IMR-90 (cell line): ENCODE measurements at regions of chr7 and their contacts with region 1.

Region 1: DNA sequence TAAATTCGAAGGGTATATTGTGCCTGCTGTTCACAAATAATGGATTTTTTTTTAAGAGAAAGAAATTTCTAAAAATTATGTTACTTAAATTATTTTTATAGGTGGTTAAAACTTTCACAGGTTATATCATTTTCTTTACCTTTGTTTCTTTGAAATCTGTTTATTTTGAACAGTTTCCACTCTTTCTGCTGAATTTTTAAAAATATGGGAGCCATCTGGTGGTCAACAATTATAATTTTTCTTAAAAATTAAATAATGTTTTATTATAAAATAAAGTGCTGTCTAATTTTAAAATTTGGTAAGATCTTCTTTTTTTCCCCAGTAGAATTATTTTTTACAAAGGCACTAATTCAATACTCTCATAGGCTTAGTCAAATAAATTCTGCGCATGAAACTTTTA is 263.9 kb downstream of the ETV1 start:
- DNase-seq: no peak
- ATAC-seq: no peak
- H3K4me3 ChIP-seq: no peak overlapping the region
- H3K27ac ChIP-seq: no peak overlapping the region
- H3K4me1 ChIP-seq: no peaks in the 10 kb centered on the region
- H3K27me3 ChIP-seq: no peaks in the 10 kb centered on the region
- CTCF ChIP-seq: 0 out of 2 replicates have a peak, but pooled peaks have one; percentile 5
- POLR2A ChIP-seq: no peak
- RAD21 ChIP-seq: 0 out of 2 replicates have a peak, but pooled peaks have one; percentile 6

Region 2: GRCh38 chr7:13532028-13532753 is 193.4 kb before region 1 on chr7:
- CTCF ChIA-PET with region 1: no interaction called
- POLR2A ChIA-PET with region 1: no interaction called
- dilution Hi-C with region 1: no loop called
- in situ Hi-C with region 1: no loop called
- intact Hi-C with region 1: loop called (anchors 5 kb)
- DNase-seq: no peak
- ATAC-seq: no peak
- H3K4me3 ChIP-seq: no peak overlapping the region
- H3K27ac ChIP-seq: no peak overlapping the region
- H3K4me1 ChIP-seq: no peaks in the 10 kb centered on the region
- H3K27me3 ChIP-seq: no peaks in the 10 kb centered on the region; the same call in 1 of the 2 replicates
- CTCF ChIP-seq: no peak
- POLR2A ChIP-seq: no peak
- RAD21 ChIP-seq: no peak